Thyroid gland (tissue), 4 donors: ENCODE measurements at regions of chr2 and their contacts with region 1.

Region 1: GRCh38 chr2:190979906-190980629 is 33.9 kb downstream of the STAT1 start:
- DNase-seq: peak; percentile 85 to 89
- H3K4me3 ChIP-seq: no peak overlapping the region
- H3K27ac ChIP-seq: peak overlapping the region; percentile 59 to 67 (median 64)
- H3K4me1 ChIP-seq: peaks cover 0 to 14% of the 10 kb centered on the region in 2 donors
- H3K27me3 ChIP-seq: no peaks in the 10 kb centered on the region
- CTCF ChIP-seq: peak in 1 of 6 experiments; percentile 10
- POLR2A ChIP-seq: no peak

Region 2: DNA sequence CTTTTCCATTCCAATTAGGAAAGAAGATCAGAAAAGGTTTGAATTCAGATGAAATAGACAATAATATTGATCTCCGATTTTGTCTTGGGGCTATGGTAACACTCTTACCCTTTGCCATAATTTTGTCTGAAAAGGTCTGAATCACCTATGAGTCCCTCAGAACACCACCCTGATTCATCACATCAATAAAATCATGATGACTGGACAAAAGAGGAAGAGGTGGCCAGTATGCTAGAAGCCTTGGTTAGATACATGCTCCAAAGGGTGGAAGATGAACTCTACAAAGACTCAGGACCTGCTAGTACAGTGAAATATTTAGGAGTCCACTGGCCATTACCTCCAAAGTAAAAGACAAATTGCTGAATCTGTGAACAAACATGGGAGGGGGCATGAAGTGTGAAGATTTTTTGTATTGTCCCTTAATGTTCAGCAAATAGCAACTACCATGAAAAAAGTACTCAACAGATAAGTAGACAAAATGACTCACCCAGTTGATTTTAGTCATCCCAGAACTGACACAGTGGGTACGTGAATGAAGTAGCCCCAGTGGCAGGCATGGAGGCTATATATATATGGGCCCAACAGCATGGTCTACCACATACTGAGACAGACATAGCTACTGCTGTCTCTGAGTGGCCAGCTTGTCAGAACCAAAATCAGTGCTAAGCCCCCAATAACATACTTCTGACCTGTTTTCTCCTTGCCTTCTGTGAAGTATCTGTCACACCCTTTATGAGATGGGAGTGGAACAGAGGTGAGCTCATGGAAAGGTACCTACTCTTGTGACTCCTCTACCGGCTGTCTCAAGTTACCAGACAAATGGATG is 136.0 kb before region 1 on chr2:
- intact Hi-C with region 1: loop called (anchors 10 kb)
- DNase-seq: no peak
- H3K4me3 ChIP-seq: no peak overlapping the region
- H3K27ac ChIP-seq: no peak overlapping the region
- H3K4me1 ChIP-seq: peaks cover 17 to 32% of the 10 kb centered on the region in 2 donors
- H3K27me3 ChIP-seq: no peaks in the 10 kb centered on the region
- CTCF ChIP-seq: no peak
- POLR2A ChIP-seq: no peak